ENCODE measurements at regions of chr1 and their contacts with region 1.

Region 1: DNA sequence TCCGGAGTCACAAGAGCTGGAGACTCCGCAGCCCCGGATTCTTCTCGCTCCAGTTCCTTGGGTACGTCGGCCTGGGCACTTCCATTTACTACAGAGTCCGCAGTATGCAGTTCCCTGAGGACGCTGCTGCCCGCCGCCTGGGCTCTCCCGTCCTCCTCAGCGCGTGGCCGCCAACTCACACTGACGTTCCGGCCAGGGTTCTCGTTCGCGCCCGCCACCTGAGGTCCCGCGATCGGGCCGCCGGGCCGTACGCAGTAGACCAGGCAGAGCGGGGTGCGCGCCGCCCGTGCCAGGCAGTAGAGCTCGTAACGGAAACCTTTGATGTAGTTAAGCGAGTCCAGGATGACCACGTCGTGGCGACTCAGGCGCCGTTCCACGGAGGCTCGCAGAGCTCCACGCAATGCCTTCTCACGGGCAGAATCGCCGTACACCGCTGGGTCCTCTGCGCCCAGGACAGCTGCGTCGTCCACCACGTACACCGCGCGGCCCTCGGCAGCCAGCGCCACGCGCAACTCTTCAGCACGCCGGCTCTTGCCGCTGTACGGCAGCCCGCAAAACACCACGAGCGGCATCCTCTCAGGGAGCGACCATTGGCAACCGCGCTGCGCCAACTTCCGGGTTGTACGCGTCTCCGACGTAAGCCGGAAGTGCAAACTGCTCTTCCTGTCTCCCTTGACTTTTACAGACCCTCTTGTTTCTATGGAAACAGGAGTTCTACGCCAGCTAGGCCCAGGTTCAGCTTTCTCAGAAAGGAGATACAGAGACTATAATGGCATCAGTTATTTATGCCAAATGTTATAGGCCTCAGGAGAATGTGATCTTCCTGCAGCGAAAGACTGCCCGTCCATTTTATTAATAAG is at the start of gene KTI12:
- DNase-seq: peak; percentile 91
- H3K4me3 ChIP-seq: peak within 1 kb of the TSS; percentile 84 to 86
- H3K27ac ChIP-seq: peak within 1 kb of the TSS; percentile 80 to 85
- H3K4me1 ChIP-seq: peaks cover 7 to 16% of the 10 kb centered on the region in 2 experiments; a peak in 3 of 4 replicates
- H3K27me3 ChIP-seq: no peaks in the 10 kb centered on the region
- CTCF ChIP-seq: no peak
- EP300 ChIP-seq: no peak; a peak in 1 of 4 replicates
- RAD21 ChIP-seq: no peak
- polyA plus RNA-seq, gene KTI12: 13.7 and 13.9 TPM in 2 replicates

Region 2: GRCh38 chr1:52056163-52056936 is 22.9 kb after region 1 on chr1 and contains the start of gene BTF3L4:
- CTCF ChIA-PET with region 1: interaction called, 5 read pairs
- POLR2A ChIA-PET with region 1: interaction called, 15 read pairs
- DNase-seq: peak; percentile 93
- H3K4me3 ChIP-seq: peak within 1 kb of the TSS; percentile 91 to 98
- H3K27ac ChIP-seq: peak within 1 kb of the TSS; percentile 87 to 98
- H3K4me1 ChIP-seq: peaks cover 13 to 21% of the 10 kb centered on the region in 2 experiments
- H3K27me3 ChIP-seq: no peaks in the 10 kb centered on the region
- CTCF ChIP-seq: no peak
- EP300 ChIP-seq: no peak
- RAD21 ChIP-seq: no peak
- polyA plus RNA-seq, gene BTF3L4: 26.1 and 40.3 TPM in 2 replicates